Activated CD8-positive, alpha-beta memory T cell treated with anti-CD3 and anti-CD28 coated beads, Interleukin-2, amount 10 ng/mL, durations not matched to agents 7 days and 5 days (primary cell): ENCODE measurements at regions of chr1 and their contacts with region 1.

Region 1: GRCh38 chr1:62407405-62408009 is 29.3 kb upstream of the USP1 start:
- DNase-seq: no peak
- ATAC-seq: no peak
- H3K4me3 Mint-ChIP-seq: no peak overlapping the region
- H3K27ac Mint-ChIP-seq: no peak overlapping the region
- H3K4me1 Mint-ChIP-seq: no peaks in the 10 kb centered on the region
- H3K27me3 Mint-ChIP-seq: no peaks in the 10 kb centered on the region

Region 2: GRCh38 chr1:62175568-62176179 is 231.8 kb before region 1 on chr1:
- CTCF ChIA-PET with region 1: interaction called, 38 read pairs
- DNase-seq: peak; percentile 46
- ATAC-seq: peak; percentile 33
- H3K4me3 Mint-ChIP-seq: no peak overlapping the region
- H3K27ac Mint-ChIP-seq: no peak overlapping the region
- H3K4me1 Mint-ChIP-seq: no peaks in the 10 kb centered on the region
- H3K27me3 Mint-ChIP-seq: peaks cover 3% of the 10 kb centered on the region

Region 3: DNA sequence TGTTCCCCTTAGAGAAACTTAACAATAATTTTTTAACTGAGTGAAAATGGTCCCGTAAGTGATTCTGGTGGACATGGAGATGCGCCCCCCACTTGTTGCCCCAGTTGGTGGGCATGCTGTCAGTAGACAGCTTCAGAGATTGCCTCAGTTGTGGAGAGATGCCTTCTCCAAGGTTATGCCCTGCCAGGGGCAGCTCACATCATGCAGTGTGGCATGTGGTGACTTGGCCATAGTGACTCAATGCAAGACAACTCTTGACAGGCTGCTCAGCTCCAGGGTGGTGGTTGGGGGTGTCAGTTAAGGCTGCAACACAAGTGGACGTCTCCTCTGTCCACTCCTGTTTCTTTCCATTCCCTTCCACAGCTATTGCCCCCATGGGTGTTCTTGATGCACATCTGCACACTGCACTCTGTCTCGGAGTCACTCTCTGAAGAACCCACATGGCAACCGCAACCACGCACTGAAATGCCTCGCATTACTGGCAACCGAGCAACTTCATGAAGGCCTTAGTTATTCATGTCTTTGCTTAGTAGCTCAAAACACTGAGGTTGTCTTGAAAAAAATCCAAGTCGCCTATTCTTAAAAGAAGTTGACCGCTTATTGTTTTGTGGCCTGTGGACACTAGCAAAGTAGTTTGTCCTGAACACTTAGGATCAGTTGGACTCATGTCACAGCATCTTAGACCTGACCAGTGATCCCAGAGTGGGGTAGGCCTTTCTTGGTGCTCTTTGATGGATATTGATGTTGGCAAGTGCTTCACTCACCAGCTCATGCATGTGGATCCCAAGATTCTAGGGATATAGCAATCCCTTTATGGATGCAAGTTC is 25.5 kb before region 1 on chr1:
- CTCF ChIA-PET with region 1: no interaction called
- DNase-seq: no peak
- ATAC-seq: no peak
- H3K4me3 Mint-ChIP-seq: no peak overlapping the region
- H3K27ac Mint-ChIP-seq: no peak overlapping the region
- H3K4me1 Mint-ChIP-seq: no peaks in the 10 kb centered on the region
- H3K27me3 Mint-ChIP-seq: no peaks in the 10 kb centered on the region